Dorsolateral prefrontal cortex (tissue), 120 donors: ENCODE measurements at regions of chr12 and their contacts with region 1.

Region 1: DNA sequence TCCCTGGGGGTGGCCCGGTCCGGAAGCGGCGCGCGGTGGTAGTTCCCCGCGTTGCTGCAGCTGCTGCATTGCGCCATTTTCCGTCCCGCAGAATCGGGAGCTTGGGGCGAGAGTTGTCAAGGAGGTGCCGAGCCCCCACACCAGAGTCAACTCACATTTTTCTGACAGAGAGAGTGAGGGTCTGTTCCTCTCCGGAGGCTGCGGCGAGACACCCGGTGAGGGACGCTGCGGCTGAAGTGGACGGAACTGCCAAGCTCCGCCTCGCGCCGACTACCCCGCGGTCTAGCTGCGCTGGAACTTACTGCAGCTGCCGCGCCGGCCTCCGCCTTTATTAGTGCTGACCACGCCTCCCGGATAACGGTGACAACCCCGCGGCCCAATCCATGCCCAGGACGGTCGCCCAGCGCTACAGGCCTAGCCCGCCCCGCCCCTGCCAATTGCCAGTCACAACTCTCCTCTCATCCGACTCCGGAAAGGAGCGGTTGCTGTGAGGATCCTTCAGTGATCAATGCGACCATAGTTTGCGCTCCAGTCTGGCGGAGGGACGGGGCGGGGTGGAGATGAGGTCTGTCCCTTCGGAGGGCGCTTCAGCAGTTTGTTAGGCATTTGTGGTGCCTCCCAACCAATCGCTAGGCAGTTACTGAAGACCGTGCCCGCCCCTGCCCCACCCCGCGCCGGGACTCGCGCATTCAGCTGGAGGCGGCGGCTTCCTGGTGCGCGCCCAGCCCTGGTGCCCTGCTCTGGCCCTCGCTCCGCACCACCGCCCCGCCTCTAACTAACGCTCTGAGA is at the start of gene VAMP1:
- DNase-seq: peak; percentile 96 to 100 (median 100)
- H3K4me3 ChIP-seq: peak within 1 kb of the TSS; percentile 64 to 99 (median 87)
- H3K27ac ChIP-seq: peak within 1 kb of the TSS; percentile 58 to 97 (median 91)
- H3K27me3 ChIP-seq: no peaks in the 10 kb centered on the region
- CTCF ChIP-seq: peak in 44 of 56 donors; percentile 4 to 65 (median 30)
- total RNA-seq, gene VAMP1: 90.3 to 464 (median 220) TPM

Region 2: DNA sequence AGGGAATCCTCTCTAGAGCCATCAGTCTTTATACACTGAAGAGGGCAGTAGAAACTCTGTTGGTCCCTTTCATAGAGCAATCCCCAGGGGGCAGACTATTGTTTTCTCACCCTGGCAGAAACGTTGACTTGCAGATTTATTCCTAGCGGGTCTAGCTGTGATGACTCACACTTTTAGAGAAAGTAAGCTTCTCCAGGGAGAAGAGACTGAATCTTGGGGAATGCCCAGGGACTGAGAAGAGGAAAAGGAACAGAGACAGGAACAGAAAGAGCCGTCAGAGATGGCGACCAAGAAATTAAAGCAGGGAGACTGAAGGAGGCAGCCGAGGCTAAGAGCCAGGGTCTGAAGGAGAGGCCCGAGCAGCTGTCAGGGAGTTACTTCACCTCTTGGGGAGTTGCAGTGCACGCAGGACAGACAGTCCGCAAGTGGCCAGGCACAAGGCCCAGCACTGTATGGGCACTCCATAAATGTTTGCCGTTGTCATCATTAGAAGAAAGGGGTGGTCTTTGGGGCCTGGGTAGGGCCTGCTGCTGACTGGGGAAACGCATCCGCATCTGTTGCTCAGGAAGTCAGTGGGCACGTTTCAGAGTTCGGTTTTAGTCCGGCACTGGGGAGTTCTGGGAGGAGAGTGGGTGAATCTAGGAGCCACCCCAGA is 147.1 kb before region 1 on chr12:
- intact Hi-C with region 1: loop called (anchors 5 to 10 kb)
- DNase-seq: no peak
- H3K4me3 ChIP-seq: peak overlapping the region in 16 of 59 donors; percentile 2 to 40 (median 19)
- H3K27ac ChIP-seq: peak overlapping the region in 50 of 59 donors; percentile 3 to 81 (median 55)
- H3K27me3 ChIP-seq: no peaks in the 10 kb centered on the region
- CTCF ChIP-seq: peak in 53 of 56 donors; percentile 13 to 62 (median 42)

Region 3: GRCh38 chr12:6347367-6348337 is 122.9 kb before region 1 on chr12:
- intact Hi-C with region 1: no loop called
- DNase-seq: no peak
- H3K4me3 ChIP-seq: peak overlapping the region in 7 of 59 donors; percentile 1 to 20 (median 6)
- H3K27ac ChIP-seq: peak overlapping the region in 20 of 59 donors; percentile 4 to 78 (median 28)
- H3K27me3 ChIP-seq: peaks cover 0 to 3% (median 0%) of the 10 kb centered on the region in 45 donors
- CTCF ChIP-seq: no peak

Region 4: GRCh38 chr12:6363611-6364328 is 106.8 kb before region 1 on chr12:
- intact Hi-C with region 1: no loop called
- DNase-seq: no peak
- H3K4me3 ChIP-seq: peak overlapping the region; percentile 24 to 68 (median 57)
- H3K27ac ChIP-seq: peak overlapping the region in 50 of 59 donors; percentile 2 to 89 (median 66)
- H3K27me3 ChIP-seq: peaks cover 0 to 10% (median 0%) of the 10 kb centered on the region in 45 donors
- CTCF ChIP-seq: no peak

Region 5: GRCh38 chr12:6423267-6424007 is 47.1 kb before region 1 on chr12:
- intact Hi-C with region 1: loop called (anchors 2 to 5 kb)
- DNase-seq: peak; percentile 49 to 80 (median 76)
- H3K4me3 ChIP-seq: peak overlapping the region in 1 of 59 donors; percentile 21
- H3K27ac ChIP-seq: peak overlapping the region in 9 of 59 donors; percentile 9 to 46 (median 33)
- H3K27me3 ChIP-seq: peaks cover 0 to 6% (median 0%) of the 10 kb centered on the region in 45 donors
- CTCF ChIP-seq: peak; percentile 66 to 97 (median 92)

Region 6: DNA sequence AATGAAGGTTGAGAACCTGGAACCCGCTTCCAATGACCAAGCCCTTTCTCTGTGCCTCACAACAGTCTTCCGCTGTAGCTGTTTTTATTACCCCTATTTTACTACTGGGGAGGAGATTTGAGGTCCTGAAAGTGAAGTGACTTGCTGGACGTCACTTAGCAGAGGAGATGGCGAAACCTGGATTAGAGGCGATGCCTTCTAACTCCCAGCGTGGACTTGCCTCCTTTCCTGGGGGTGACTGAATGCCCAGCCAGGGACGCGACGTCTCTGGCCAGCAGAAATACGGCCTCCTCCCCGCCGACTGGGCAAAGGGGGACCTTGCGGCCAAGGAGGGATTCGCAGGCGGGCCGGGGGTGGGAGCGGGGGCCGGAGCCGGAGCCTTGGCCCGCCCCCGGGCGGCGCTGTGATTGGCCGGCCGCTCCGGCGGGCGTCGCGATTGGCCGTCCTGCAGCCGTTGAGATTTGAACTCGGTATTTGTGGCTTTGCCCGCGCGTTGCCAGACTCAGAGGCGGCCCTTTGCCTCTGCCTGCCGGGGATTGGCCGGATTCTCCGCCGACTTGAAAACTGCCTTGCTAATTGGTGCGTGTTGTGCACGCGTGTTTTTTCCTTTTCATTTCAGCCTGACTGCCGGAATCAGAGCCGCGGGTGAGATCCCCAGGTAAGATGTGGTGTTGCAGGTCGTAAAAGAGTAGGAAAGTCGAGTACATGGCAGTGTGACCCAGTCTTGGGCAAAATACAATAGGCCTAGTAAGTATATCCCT is 23.1 kb after region 1 on chr12 and contains the start of gene NCAPD2:
- intact Hi-C with region 1: loop called (anchors 1 kb)
- DNase-seq: peak; percentile 93 to 99 (median 98)
- H3K4me3 ChIP-seq: peak within 1 kb of the TSS; percentile 57 to 100 (median 90)
- H3K27ac ChIP-seq: peak within 1 kb of the TSS; percentile 69 to 99 (median 97)
- H3K27me3 ChIP-seq: no peaks in the 10 kb centered on the region
- CTCF ChIP-seq: peak in 44 of 56 donors; percentile 13 to 58 (median 34)
- total RNA-seq, gene NCAPD2: 10.2 to 44.7 (median 21.8) TPM

Region 7: GRCh38 chr12:6554168-6555017 is 83.8 kb after region 1 on chr12:
- intact Hi-C with region 1: loop called in 1 of 2 experiments (anchors 5 kb)
- DNase-seq: peak in 7 of 10 donors; percentile 67 to 88 (median 75)
- H3K4me3 ChIP-seq: peak overlapping the region; percentile 64 to 100 (median 95)
- H3K27ac ChIP-seq: peak overlapping the region in 58 of 59 donors; percentile 8 to 98 (median 94)
- H3K27me3 ChIP-seq: no peaks in the 10 kb centered on the region
- CTCF ChIP-seq: peak in 55 of 56 donors; percentile 25 to 76 (median 58)